ENCODE measurements at regions of chr7 and their contacts with region 1.

Region 1: DNA sequence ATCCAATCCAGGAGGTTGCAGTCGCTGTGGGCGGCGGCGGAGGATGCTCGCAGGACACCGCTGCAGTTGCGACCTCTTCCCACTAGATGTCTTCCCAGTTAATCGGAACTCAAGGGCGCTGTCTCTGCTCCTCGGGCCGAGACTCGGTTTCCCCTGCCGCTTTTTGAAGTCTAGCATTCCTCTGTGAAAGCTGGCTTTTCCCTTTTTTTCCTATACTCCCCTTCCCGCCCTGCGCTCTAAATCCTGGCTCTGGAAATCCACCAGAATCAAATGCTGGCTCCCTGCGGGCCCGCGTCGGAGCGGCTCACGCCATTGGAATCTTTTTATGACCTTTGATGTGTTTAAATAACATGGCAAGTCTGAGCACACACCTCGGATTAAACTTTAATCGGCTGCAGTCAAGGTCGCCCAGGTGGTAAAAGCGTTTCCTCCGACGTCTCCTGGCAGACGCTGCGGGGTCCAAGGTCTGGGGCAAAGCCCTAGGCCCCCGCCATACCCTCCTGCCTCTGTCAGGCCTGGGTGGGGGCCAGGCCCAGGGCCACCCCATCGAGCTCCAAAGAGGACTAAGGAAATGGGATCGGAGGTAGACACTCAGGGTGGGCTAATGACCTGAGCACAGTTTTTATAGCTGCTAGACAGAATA is 10.7 kb upstream of the HOXA13 start:
- DNase-seq: peak in 6 of 7 donors; percentile 51 to 78 (median 62)
- H3K4me3 ChIP-seq: peak overlapping the region in 1 of 4 donors; percentile 50
- H3K27ac ChIP-seq: no peak overlapping the region
- H3K4me1 ChIP-seq: peaks cover 0 to 4% of the 10 kb centered on the region in 2 donors
- H3K27me3 ChIP-seq: peaks cover 73% of the 10 kb centered on the region
- CTCF ChIP-seq: peak; percentile 63 to 85 (median 74)
- POLR2A ChIP-seq: no peak

Region 2: DNA sequence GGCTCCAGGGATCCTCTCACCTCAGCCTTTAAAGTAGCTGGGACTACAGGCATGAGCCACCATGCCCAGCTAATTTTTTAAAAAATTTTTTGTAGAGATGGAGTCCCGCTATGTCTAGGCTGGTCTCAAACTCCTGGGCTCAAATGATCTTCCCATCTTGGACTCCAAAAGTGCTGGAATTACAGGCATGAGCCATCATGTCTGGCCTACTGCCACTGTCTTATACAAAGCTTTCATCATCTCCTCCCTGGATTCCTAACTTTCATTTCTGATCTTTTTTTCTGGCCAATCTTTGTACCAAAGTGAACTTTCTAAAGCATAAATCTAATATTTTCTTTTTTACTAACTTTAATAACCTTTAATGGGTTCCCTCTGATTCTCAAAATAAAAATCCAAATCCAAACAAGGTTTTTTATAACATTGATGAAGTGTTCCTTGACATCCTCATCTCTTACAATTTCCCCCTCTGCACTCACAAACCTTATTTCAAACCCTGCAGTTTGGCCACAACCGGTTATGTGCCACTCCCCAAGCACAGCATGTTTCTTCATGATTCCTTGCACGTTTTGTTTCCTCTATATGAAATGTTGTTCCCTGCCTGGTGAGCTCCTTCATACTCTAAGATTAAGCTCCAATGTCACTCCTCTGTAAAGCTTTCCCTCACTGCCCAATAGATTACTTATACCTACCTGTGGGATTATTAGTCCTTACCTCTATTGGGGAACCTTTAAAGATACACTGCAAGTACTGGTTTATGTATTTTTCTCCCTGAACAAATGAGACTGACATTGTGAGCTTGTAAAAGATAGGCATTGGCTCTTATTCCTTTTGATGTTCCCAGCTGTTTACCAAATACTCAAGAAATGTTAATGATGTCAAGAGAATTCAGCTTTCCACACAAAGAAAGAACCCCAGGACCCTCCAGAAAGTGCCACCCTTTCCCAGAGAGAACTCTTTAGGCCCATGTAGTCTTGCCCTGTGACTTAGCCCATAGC is 216.4 kb before region 1 on chr7:
- intact Hi-C with region 1: no loop called
- DNase-seq: peak in 1 of 7 donors; percentile 4
- H3K4me3 ChIP-seq: no peak overlapping the region
- H3K27ac ChIP-seq: no peak overlapping the region
- H3K4me1 ChIP-seq: no peaks in the 10 kb centered on the region
- H3K27me3 ChIP-seq: no peaks in the 10 kb centered on the region
- CTCF ChIP-seq: no peak
- POLR2A ChIP-seq: no peak

Region 3: DNA sequence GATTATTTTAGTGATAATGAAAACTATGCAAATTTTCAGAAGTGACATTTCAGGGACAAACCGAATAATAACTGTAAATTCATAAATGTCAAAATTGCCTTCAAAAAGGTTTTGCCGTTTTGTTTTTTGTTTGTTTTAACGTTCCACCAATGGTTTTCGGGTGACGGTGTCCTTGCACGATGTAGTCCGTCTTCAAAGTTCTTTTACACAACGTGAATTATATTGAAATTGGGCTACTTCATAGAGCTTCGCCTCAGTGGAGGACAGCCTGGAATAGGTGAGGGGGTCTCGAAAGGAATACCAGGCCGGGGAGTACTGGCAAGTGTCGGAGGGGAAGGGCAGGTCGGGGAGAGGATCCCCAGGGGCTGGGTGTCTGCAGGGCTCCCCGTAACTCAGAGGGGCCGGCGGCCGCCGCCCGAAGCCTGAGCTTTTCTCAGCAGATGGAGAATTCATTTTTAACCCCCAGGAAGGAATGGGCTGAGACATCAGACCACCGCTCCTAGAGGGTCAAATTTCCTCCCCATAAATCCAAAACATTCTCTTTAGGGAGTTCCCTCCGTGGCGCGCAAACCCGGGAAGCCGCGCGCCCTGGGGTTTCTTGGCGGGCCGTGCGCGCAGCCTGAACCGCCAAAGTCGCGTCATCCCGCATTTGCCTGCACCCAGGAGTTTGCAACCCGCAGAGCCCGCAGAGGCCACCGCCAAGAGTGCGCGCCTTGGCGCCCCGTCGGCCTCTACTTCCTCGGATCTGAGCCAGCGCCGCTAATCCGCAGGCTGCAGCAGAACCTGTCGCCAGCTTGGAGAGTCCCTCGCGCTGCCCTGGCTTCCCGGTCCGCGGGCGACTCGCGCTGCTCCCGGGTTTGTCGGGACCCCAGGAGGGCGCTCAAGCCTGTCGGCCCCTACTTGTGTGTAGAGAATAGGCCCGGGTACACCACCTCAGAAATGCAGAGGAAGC is 14.7 kb after region 1 on chr7:
- intact Hi-C with region 1: no loop called
- DNase-seq: peak in 1 of 7 donors; percentile 28
- H3K4me3 ChIP-seq: no peak overlapping the region
- H3K27ac ChIP-seq: no peak overlapping the region
- H3K4me1 ChIP-seq: no peaks in the 10 kb centered on the region
- H3K27me3 ChIP-seq: peaks cover 63% of the 10 kb centered on the region
- CTCF ChIP-seq: no peak
- POLR2A ChIP-seq: no peak

Region 4: DNA sequence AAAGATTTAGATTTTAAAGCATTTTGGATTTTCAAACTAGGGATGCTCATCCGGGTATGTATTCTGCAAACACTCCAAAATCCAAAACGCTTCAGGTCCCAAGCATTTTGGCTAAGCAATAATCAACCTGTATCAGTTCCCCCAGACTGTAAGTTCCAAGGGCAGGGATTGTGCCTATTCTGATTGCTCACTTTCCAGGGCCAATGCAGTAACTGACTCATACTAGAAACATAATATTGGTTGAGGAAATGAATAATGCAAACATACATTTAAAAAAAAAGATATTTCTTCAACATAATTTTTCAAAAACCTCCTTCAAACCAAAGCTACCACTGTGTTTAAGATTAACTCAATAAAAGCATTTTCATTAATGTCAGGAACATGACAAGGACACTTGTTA is 382.7 kb after region 1 on chr7:
- intact Hi-C with region 1: loop called in 1 of 2 experiments (anchors 10 kb)
- DNase-seq: no peak
- H3K4me3 ChIP-seq: no peak overlapping the region
- H3K27ac ChIP-seq: no peak overlapping the region
- H3K4me1 ChIP-seq: peaks cover 0 to 7% of the 10 kb centered on the region in 2 donors
- H3K27me3 ChIP-seq: no peaks in the 10 kb centered on the region
- CTCF ChIP-seq: no peak
- POLR2A ChIP-seq: no peak